Calu3 (cell line): ENCODE measurements at regions of chr13 and their contacts with region 1.

Region 1: GRCh38 chr13:19782049-19782726 is 557 bp downstream of the PSPC1 start:
- DNase-seq: peak; percentile 15
- H3K4me3 Mint-ChIP-seq: peak overlapping the region; percentile 79
- H3K27ac Mint-ChIP-seq: peak overlapping the region; percentile 95
- H3K4me1 Mint-ChIP-seq: no peaks in the 10 kb centered on the region
- H3K27me3 Mint-ChIP-seq: no peaks in the 10 kb centered on the region
- CTCF ChIP-seq: no peak

Region 2: DNA sequence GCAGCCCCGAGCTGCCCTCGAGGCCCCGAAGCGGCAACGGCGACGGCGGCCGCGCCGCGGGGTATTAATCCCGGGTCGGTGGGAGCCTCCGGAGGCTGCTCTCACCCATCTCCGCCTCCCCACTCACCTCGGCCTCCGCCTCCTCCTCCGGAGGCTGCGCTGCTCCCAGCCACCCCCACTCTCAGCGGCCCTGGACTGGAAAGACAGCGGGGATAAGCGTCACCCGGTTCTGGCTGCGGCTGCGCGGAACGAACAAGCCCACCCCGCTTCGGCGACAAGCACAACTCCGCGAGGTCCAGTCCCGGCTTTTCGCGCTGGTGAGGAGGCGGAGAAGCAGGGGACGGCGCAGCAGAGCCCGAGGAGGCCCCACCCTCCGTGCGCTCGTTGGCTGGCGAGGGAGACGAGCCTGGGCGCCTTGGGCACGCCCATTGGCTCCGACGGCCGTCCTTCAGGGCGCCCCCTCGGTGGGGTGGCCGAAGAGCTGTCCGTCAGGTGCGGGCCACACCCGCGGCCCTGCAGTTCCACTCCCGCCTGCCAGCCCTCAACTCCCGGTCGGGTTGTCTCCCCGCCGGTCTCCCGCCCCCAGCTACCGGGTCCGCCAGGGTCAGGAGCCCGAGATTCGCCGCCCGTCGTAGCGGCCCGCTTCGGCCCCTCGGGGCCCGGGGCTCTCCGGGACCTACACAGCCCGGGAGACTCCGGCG is 81.3 kb after region 1 on chr13 and contains the start of gene ZMYM5:
- CTCF ChIA-PET with region 1: no interaction called
- intact Hi-C with region 1: loop called (anchors 5 kb)
- DNase-seq: peak; percentile 97
- H3K4me3 Mint-ChIP-seq: peak within 1 kb of the TSS; percentile 80
- H3K27ac Mint-ChIP-seq: peak within 1 kb of the TSS; percentile 88
- H3K4me1 Mint-ChIP-seq: no peaks in the 10 kb centered on the region
- H3K27me3 Mint-ChIP-seq: no peaks in the 10 kb centered on the region
- CTCF ChIP-seq: no peak
- total RNA-seq, gene ZMYM5: 8.6 and 10.6 TPM in 2 replicates

Region 3: GRCh38 chr13:19888799-19889198 is 106.6 kb after region 1 on chr13:
- CTCF ChIA-PET with region 1: no interaction called
- intact Hi-C with region 1: no loop called
- DNase-seq: no peak
- H3K4me3 Mint-ChIP-seq: no peak overlapping the region
- H3K27ac Mint-ChIP-seq: no peak overlapping the region
- H3K4me1 Mint-ChIP-seq: no peaks in the 10 kb centered on the region
- H3K27me3 Mint-ChIP-seq: no peaks in the 10 kb centered on the region
- CTCF ChIP-seq: no peak